ENCODE measurements at regions of chr16 and their contacts with region 1.

Region 1: GRCh38 chr16:1782352-1783091 is at the starts of genes NUBP2 and SPSB3:
- DNase-seq: peak; percentile 100
- H3K4me3 ChIP-seq: peak within 1 kb of the TSS; percentile 89
- H3K27ac ChIP-seq: peak within 1 kb of the TSS; percentile 44
- H3K4me1 ChIP-seq: peaks cover 13% of the 10 kb centered on the region
- CTCF ChIP-seq: no peak
- total RNA-seq, gene NUBP2: 70.5 and 94.9 TPM in 2 replicates
- total RNA-seq, gene SPSB3: 52.4 and 53.7 TPM in 2 replicates

Region 2: DNA sequence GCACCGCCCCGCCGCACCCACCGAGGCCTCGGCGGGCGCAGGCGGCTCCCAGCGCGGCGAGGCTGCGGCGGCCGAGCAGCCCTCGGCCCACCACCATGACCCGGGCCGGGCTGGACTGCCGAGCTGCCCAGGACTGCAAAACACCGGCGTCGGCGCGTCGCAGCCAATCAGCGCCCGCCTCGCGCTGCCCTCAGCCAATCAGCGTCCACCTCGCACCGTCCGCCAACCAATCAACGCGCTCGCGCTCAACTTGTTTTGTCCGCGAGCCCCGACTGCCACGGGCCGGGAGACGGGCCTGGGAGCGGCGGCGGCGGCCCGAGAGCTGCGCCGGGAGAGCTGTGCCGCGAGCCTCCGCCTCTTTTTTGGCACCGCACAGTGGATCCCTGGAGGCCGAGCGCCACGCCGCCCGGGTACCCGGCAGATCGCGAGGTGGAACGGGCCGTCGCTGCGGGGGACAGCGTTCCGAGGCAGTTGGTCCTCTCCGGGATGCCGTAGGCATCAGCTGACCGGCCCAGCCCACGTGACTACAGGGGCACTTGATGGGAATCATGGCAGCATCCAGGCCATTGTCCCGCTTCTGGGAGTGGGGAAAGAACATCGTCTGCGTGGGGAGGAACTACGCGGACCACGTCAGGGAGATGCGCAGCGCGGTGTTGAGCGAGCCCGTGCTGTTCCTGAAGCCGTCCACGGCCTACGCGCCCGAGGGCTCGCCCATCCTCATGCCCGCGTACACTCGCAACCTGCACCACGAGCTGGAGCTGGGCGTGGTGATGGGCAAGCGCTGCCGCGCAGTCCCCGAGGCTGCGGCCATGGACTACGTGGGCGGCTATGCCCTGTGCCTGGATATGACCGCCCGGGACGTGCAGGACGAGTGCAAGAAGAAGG is 44.4 kb after region 1 on chr16 and contains the starts of genes FAHD1 and HAGH:
- CTCF ChIA-PET with region 1: no interaction called
- POLR2A ChIA-PET with region 1: no interaction called
- intact Hi-C with region 1: loop called (anchors 5 kb)
- DNase-seq: peak; percentile 90
- H3K4me3 ChIP-seq: peak within 1 kb of the TSS; percentile 78
- H3K27ac ChIP-seq: no peak within 1 kb of the TSS
- H3K4me1 ChIP-seq: peaks cover 23% of the 10 kb centered on the region
- CTCF ChIP-seq: no peak
- total RNA-seq, gene FAHD1: 30.7 and 32.4 TPM in 2 replicates
- total RNA-seq, gene HAGH: 26.9 and 30.5 TPM in 2 replicates

Region 3: GRCh38 chr16:1942810-1943726 is 160.5 kb after region 1 on chr16 and contains the start of gene MSRB1:
- CTCF ChIA-PET with region 1: no interaction called
- POLR2A ChIA-PET with region 1: interaction called, 4 read pairs
- intact Hi-C with region 1: loop called (anchors 5 kb)
- DNase-seq: peak; percentile 100
- H3K4me3 ChIP-seq: peak within 1 kb of the TSS; percentile 84
- H3K27ac ChIP-seq: no peak within 1 kb of the TSS
- H3K4me1 ChIP-seq: peaks cover 18% of the 10 kb centered on the region
- CTCF ChIP-seq: peak; percentile 29; the same call in 1 of the 2 replicates
- total RNA-seq, gene MSRB1: 5.2 and 9.0 TPM in 2 replicates

Region 4: DNA sequence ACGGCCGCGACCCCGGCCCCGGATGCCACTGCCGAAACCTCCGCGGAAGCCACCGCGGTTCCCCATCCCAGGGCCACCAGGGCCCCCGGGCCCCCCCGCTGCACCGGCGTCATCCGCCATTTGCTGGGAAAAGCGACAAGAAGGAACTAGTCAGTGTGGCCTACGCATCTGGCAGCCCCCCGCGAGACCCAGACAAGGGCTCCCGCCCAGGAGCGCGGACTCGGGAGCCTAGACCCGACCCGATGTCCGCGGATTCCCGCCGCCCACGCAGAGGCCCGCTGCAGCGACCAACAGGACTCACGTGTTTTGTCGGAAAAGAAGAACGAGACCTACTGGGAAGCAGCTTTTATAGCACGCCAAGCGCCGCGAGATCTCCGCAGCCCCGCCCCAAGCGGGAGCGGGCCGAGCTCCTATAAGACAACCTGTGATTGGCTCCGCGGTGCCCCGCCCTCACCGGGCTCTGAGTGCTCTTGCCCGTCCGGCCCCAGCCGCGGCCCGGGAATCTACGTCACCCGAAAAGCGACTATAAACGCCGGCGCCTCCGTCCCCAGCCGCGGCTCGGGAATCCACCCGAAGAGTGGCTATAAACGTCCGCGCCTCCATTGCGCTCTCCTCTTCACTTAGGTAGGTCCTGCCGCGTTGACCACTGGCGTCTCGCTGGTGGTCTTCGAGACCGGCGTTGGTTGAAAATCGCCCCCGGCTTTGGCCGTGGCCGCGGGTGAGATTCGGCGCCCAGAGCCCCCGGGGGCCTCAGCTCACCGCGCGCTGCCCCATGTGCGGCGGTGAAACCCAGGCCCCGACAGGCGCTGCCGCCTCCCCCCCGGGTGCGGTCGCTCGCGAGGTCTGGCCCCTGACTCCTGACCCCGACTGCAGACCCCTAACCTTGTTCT is 182.2 kb after region 1 on chr16 and contains the start of gene RPS2:
- CTCF ChIA-PET with region 1: no interaction called
- POLR2A ChIA-PET with region 1: interaction called, 11 read pairs
- intact Hi-C with region 1: no loop called
- DNase-seq: peak; percentile 99
- H3K4me3 ChIP-seq: peak within 1 kb of the TSS; percentile 82
- H3K27ac ChIP-seq: peak within 1 kb of the TSS; percentile 80
- H3K4me1 ChIP-seq: peaks cover 32% of the 10 kb centered on the region
- CTCF ChIP-seq: 0 out of 2 replicates have a peak, but pooled peaks have one; percentile 34
- total RNA-seq, gene RPS2: 2,266 and 2,461 TPM in 2 replicates